ENCODE measurements at regions of chr15 and their contacts with region 1.

Region 1: DNA sequence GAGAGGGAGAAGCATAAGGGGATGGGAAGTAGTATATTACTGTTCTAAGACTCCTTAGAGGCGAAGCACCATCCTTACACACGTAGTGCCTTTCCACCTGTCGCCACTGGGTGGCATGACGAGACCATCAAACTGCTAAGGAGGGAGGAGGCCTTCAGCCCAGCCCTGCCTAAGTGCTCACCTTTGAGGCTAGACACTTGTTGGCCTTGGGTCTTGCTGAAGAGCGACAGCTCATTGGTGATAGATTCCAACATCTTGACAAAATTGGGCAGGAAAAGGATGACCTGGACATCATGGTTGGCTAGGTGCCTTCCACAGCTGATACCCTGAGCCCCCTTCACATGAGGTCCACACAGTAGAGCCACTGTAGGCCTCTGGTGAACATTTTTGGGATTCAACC is 19.6 kb downstream of the CLK3 start:
- DNase-seq: peak; percentile 66
- ATAC-seq: peak; percentile 74

Region 2: DNA sequence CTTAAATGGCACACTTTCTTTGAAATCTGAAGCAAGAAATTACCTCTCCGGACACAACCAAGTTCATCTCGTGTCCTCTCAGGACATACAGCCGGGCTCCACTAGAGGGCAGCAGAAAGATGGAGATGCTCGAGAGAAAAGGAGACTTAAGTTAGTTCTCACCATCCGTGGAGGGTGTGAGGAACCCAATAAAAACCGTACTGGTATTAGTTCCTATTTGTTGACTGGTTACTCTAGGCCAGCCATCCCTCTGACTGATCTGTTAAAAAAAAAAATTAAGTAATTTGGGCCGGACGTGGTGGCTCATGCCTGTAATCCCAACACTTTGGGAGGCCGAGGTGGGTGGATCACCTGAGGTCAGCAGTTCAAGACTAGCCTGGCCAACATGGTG is 259.9 kb before region 1 on chr15:
- intact Hi-C with region 1: loop called (anchors 5 kb)
- DNase-seq: peak; percentile 86
- ATAC-seq: peak; percentile 72

Region 3: GRCh38 chr15:74709011-74709410 is 73.8 kb after region 1 on chr15:
- intact Hi-C with region 1: no loop called
- DNase-seq: no peak
- ATAC-seq: no peak

Region 4: GRCh38 chr15:74956648-74957300 is 321.5 kb after region 1 on chr15 and contains the start of gene RPP25:
- intact Hi-C with region 1: loop called (anchors 10 kb)
- DNase-seq: peak; percentile 90
- ATAC-seq: peak; percentile 91
- total RNA-seq, gene RPP25: 3.4 TPM